ENCODE measurements at regions of chr5 and their contacts with region 1.

Region 1: DNA sequence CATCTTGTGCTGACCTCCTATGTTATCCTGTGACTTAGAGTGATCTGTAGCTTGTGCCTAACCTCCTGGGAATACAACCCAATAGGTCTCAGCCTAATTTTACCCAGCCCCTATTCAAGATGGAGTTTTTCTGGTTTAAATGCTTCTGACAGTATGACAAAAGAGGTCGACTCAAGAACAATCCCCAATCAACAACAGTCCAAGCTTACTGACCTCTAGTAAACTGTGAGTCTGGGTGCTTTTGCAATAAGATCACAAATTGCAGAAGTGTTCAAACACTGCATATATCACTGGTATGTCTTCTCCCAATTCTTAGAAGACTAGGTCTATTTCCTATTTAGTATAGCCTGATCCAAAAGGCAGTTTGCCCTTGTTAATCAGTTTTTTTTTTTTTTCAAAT is 323.5 kb upstream of the PTGER4 start:
- H3K4me3 Mint-ChIP-seq: peak overlapping the region; percentile 23
- H3K27ac Mint-ChIP-seq: peak overlapping the region; percentile 92
- H3K4me1 Mint-ChIP-seq: peaks cover 54% of the 10 kb centered on the region
- H3K27me3 Mint-ChIP-seq: no peaks in the 10 kb centered on the region

Region 2: GRCh38 chr5:40615586-40616170 is 259.4 kb after region 1 on chr5:
- intact Hi-C with region 1: loop called (anchors 10 kb)
- H3K4me3 Mint-ChIP-seq: no peak overlapping the region
- H3K27ac Mint-ChIP-seq: peak overlapping the region; percentile 70
- H3K4me1 Mint-ChIP-seq: peaks cover 29% of the 10 kb centered on the region
- H3K27me3 Mint-ChIP-seq: no peaks in the 10 kb centered on the region

Region 3: GRCh38 chr5:40679914-40680681 is 323.9 kb after region 1 on chr5 and contains the start of gene PTGER4:
- intact Hi-C with region 1: loop called (anchors 5 kb)
- H3K4me3 Mint-ChIP-seq: peak within 1 kb of the TSS; percentile 98
- H3K27ac Mint-ChIP-seq: peak within 1 kb of the TSS; percentile 93
- H3K4me1 Mint-ChIP-seq: peaks cover 44% of the 10 kb centered on the region
- H3K27me3 Mint-ChIP-seq: no peaks in the 10 kb centered on the region

Region 4: GRCh38 chr5:41625546-41625945 is 1269.3 kb after region 1 on chr5:
- intact Hi-C with region 1: no loop called
- H3K4me3 Mint-ChIP-seq: no peak overlapping the region
- H3K27ac Mint-ChIP-seq: no peak overlapping the region
- H3K4me1 Mint-ChIP-seq: no peaks in the 10 kb centered on the region
- H3K27me3 Mint-ChIP-seq: no peaks in the 10 kb centered on the region

Measured in dendritic cell treated with granulocyte-macrophage colony-stimulating factor and Interleukin-4, amounts not matched to agents 40 ng/mL and 50 ng/mL, for 4 days (primary cell).